Transverse colon (tissue), 4 donors: ENCODE measurements at regions of chr4 and their contacts with region 1.

Region 1: DNA sequence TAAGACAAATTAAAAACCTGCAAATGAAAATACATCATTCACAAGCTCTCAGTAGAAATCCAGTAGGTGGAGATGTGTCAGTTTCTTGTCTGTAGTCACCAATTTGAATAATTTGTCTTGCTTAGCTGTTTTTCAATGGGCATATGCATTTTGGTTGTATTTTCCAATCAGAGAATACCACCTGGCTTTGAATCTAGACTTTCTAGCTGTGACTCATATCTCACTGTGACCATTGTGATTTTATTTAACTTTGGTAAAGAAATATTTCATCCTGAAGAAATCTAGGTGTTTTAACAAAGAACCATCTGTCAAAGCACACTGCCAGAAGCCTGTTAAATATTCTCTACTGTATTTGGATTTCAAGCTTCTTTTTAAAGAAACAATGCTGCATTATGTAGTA is 1650.6 kb upstream of the IGFBP7 start:
- DNase-seq: no peak
- H3K4me3 ChIP-seq: no peak overlapping the region
- H3K27ac ChIP-seq: no peak overlapping the region
- H3K4me1 ChIP-seq: no peaks in the 10 kb centered on the region
- H3K27me3 ChIP-seq: no peaks in the 10 kb centered on the region
- CTCF ChIP-seq: no peak
- EP300 ChIP-seq: no peak
- POLR2A ChIP-seq: no peak

Region 2: DNA sequence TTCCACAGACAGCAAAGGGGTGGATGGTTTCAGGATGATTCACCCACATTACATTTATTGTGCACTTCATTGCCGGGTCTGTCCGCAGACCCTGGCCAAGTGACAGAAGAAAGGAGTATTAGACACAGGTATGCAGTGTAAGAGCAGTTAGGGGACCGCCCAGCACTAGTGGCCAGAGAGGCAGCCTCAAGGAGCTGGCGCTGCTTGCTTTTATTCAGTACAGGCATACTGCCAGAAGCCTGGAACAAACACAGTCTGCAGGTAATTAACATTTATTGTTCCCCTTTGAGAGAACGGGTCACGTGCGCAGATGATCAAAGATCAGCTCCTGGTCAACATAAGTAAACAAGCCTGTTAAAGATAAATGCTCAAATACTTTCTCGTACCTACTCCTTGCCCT is 11.5 kb before region 1 on chr4:
- in situ Hi-C with region 1: no loop called
- intact Hi-C with region 1: loop called (anchors 1 kb)
- DNase-seq: peak; percentile 73
- H3K4me3 ChIP-seq: no peak overlapping the region
- H3K27ac ChIP-seq: peak overlapping the region in 2 of 4 donors; percentile 13 to 52
- H3K4me1 ChIP-seq: peaks cover 0 to 13% (median 4%) of the 10 kb centered on the region in 4 donors
- H3K27me3 ChIP-seq: no peaks in the 10 kb centered on the region
- CTCF ChIP-seq: no peak
- EP300 ChIP-seq: no peak
- POLR2A ChIP-seq: no peak